ENCODE measurements at regions of chr16 and their contacts with region 1.

Region 1: DNA sequence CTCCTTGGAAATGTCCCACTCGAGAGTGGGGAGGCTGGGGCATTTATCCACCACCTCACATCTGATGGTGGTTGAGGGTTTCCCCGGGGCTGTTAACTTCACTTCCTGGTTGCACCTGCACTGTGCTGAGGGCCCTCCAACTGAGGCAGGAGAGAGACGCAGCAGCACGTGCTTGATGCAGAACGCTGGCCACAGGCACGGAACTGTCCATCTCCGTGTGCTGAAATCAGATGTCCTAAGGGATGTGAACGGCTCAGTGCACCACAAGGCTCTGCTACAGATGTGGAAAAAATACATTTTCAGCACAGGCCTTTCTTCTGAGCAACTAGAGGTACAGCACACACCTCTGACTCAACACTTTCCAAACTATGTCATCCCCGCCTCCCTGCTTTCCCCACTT is 114.8 kb upstream of the C16orf82 start:
- DNase-seq: no peak
- ATAC-seq: no peak
- H3K4me3 ChIP-seq: no peak overlapping the region
- H3K27ac ChIP-seq: no peak overlapping the region
- H3K4me1 ChIP-seq: no peaks in the 10 kb centered on the region
- H3K27me3 ChIP-seq: no peaks in the 10 kb centered on the region

Region 2: GRCh38 chr16:25978218-25978617 is 973.7 kb before region 1 on chr16:
- intact Hi-C with region 1: loop called in 1 of 4 experiments (anchors 10 kb)
- DNase-seq: peak in 1 of 3 donors; percentile 55
- ATAC-seq: peak in 1 of 2 donors; percentile 71
- H3K4me3 ChIP-seq: no peak overlapping the region
- H3K27ac ChIP-seq: no peak overlapping the region
- H3K4me1 ChIP-seq: no peaks in the 10 kb centered on the region
- H3K27me3 ChIP-seq: no peaks in the 10 kb centered on the region

Region 3: DNA sequence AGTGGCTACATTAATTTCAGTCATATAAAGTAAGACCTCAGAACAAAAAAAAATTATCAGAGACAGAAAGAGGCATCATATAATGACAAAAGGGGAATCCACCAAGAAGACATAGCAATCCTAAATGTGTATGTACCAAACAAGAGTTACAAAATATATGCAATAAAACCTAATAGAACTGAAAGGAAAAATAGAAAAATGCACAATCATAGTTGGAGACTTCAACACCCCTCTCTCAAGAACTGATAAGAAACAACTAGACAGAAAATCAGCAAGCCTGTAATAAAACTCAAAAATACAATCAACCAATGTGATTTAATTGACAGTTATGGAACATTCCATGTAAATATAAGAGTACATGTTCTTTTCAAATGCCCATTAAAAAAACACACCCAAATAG is 53.4 kb after region 1 on chr16:
- intact Hi-C with region 1: no loop called
- DNase-seq: no peak
- ATAC-seq: no peak
- H3K4me3 ChIP-seq: no peak overlapping the region
- H3K27ac ChIP-seq: no peak overlapping the region
- H3K4me1 ChIP-seq: no peaks in the 10 kb centered on the region
- H3K27me3 ChIP-seq: peaks cover 2% of the 10 kb centered on the region